Activated T-helper 1 cell treated with anti-CD3 and anti-CD28 coated beads, Interleukin-12 subunit alpha, Interleukin-12 subunit beta, Interleukin-2, Interleukin-4 antibody, amounts not matched to agents 30 ng/mL and 10 ng/mL and 1 ng/mL, durations not matched to agents 14 hours and 24 hours and 36 hours (primary cell): ENCODE measurements at regions of chr12 and their contacts with region 1.

Region 1: DNA sequence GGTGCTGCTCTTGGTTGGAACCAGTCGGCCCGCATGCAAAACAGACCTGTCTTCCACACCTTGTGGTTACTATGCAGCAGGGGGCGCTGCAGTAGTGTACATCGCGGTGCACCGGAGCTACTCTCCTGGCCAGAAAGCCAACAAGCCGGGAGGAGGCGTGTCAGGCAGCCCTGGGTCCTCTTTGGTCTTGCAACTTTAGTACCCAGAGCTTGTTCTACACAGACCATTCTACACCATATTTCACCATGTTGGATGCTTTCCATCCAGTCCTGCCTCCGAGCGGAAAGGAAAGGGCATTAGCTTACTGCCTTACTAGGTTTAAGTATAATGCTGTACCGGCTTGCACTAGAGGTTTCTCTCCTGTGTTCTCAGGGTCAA is 927 bp upstream of the TMTC2 start:
- DNase-seq: peak; percentile 82
- H3K4me3 Mint-ChIP-seq: peak overlapping the region; percentile 92
- H3K27ac Mint-ChIP-seq: peak overlapping the region; percentile 92
- H3K4me1 Mint-ChIP-seq: peaks cover 40% of the 10 kb centered on the region
- H3K27me3 Mint-ChIP-seq: peaks cover 10% of the 10 kb centered on the region

Region 2: DNA sequence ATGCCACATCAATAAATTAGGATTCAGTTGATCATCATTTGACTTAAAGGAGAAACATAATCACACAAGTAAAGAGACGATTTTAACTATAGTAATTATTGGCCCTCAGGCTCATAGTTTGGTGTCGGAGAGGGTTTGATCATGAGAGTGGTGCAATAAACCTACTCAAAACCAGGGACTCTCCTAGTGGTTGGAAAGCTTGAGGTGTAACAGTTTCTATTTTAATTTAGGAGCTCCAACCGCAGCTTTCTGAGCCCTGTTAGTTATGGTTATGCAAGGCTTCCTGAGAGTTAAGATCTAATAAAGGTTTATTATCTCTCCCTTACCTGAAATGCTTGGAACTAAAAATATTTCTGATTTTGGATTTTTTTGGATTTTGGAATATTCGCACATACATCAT is 37.3 kb after region 1 on chr12:
- intact Hi-C with region 1: loop called (anchors 1 kb)
- DNase-seq: no peak
- H3K4me3 Mint-ChIP-seq: peak overlapping the region; percentile 39
- H3K27ac Mint-ChIP-seq: no peak overlapping the region
- H3K4me1 Mint-ChIP-seq: peaks cover 10% of the 10 kb centered on the region
- H3K27me3 Mint-ChIP-seq: no peaks in the 10 kb centered on the region

Region 3: GRCh38 chr12:82874945-82875344 is 189.2 kb after region 1 on chr12:
- intact Hi-C with region 1: loop called (anchors 5 kb)
- DNase-seq: no peak
- H3K4me3 Mint-ChIP-seq: no peak overlapping the region
- H3K27ac Mint-ChIP-seq: no peak overlapping the region
- H3K4me1 Mint-ChIP-seq: no peaks in the 10 kb centered on the region
- H3K27me3 Mint-ChIP-seq: no peaks in the 10 kb centered on the region

Region 4: GRCh38 chr12:83389237-83389996 is 703.6 kb after region 1 on chr12:
- intact Hi-C with region 1: loop called (anchors 2 kb)
- DNase-seq: no peak
- H3K4me3 Mint-ChIP-seq: no peak overlapping the region
- H3K27ac Mint-ChIP-seq: no peak overlapping the region
- H3K4me1 Mint-ChIP-seq: no peaks in the 10 kb centered on the region
- H3K27me3 Mint-ChIP-seq: peaks cover 2% of the 10 kb centered on the region